Ascending aorta (tissue), 2 donors: ENCODE measurements at regions of chr9 and their contacts with region 1.

Region 1: GRCh38 chr9:109497226-109498153 is 617 bp downstream of the PTPN3 start:
- DNase-seq: no peak
- H3K4me3 ChIP-seq: peak overlapping the region; percentile 76 to 84
- H3K27ac ChIP-seq: peak overlapping the region; percentile 45 to 55
- H3K4me1 ChIP-seq: peaks cover 0 to 22% of the 10 kb centered on the region in 2 donors
- H3K27me3 ChIP-seq: no peaks in the 10 kb centered on the region
- CTCF ChIP-seq: no peak

Region 2: DNA sequence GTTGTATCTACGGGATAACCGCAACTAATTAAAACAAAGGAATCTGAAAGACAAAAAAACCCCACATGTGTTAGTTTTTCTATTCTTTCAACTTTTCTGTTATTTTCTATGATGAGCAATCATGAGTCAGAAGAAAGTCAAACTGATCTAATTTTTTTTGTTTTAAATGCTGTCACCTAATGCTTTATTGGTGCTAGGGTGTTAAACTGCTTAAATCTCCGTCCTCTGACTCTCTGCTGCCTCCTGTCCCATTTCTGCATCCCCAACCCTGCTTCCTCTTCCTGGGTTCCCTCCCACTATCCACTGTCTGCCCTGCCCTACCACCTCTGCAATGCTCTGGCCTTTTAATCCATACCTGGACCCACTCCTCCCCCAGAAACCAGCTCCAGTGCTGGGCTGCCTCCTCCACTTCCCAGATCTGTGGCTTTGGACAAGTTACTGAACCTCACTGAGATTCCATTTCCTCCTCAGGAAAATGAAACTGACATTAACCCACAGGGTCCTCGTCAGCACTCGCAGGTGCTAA is 15.0 kb before region 1 on chr9:
- intact Hi-C with region 1: loop called (anchors 2 kb)
- DNase-seq: no peak
- H3K4me3 ChIP-seq: no peak overlapping the region
- H3K27ac ChIP-seq: peak overlapping the region; percentile 40 to 67
- H3K4me1 ChIP-seq: peaks cover 0 to 7% of the 10 kb centered on the region in 2 donors
- H3K27me3 ChIP-seq: no peaks in the 10 kb centered on the region
- CTCF ChIP-seq: no peak

Region 3: GRCh38 chr9:109520478-109521132 is 23.1 kb after region 1 on chr9:
- intact Hi-C with region 1: no loop called
- DNase-seq: peak in 1 of 2 donors; percentile 86
- H3K4me3 ChIP-seq: no peak overlapping the region
- H3K27ac ChIP-seq: no peak overlapping the region
- H3K4me1 ChIP-seq: peaks cover 0 to 3% of the 10 kb centered on the region in 2 donors
- H3K27me3 ChIP-seq: no peaks in the 10 kb centered on the region
- CTCF ChIP-seq: peak; percentile 85 to 93 (median 87)